ENCODE measurements at regions of chr3 and their contacts with region 1.

Region 1: GRCh38 chr3:157081681-157082210 is 78.2 kb downstream of the CCNL1 start:
- DNase-seq: no peak
- ATAC-seq: peak; percentile 95
- H3K4me3 ChIP-seq: no peak overlapping the region
- H3K27ac ChIP-seq: no peak overlapping the region
- H3K4me1 ChIP-seq: peaks cover 14% of the 10 kb centered on the region
- H3K27me3 ChIP-seq: no peaks in the 10 kb centered on the region
- CTCF ChIP-seq: peak; percentile 95
- EP300 ChIP-seq: no peak
- POLR2A ChIP-seq: no peak
- RAD21 ChIP-seq: peak; percentile 100

Region 2: DNA sequence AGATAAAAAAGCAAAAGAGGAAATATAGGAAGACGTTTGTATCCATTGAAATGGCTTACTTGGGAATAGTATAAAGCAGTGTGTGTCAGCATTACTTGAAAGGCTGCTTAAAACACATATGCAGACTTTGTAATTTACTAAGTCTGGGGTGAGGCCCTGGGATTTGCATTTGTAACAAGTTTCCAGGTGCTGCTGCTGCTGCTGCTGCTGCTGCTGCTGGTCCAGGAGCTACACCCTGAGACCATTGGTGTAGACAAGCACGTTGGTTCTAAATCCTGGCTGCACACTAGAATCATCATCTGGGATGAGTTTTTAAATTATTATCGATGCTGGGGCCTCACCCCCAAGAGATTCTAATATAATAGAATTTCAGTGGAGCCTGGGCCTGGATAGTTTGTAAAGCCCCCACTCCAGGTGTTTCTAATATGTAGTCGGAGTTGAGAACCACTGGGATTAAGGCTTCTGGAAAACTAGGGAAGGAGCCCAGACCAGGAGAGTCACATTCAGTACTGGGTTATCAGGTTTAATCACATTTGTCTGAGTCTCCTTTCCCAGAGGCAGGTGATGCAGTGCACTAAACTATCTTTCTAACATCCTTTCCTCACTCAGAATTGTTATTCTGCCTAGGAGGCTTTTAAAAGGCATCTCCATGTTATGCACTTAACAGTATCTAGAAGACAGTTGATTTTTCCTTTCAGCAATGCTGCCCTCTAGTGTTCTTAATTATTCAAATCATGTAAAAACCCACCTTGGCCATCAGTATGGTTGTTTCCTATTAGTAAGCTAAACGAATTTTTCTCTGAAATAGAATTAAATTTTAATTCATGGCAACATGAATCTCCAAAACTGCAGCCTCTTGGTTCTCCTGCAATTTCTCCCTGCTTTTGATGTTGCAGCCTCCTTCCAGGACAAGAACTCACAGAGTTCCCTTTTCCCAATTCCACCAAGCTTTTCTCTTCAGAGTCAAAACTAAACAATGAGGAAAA is 572.3 kb before region 1 on chr3:
- CTCF ChIA-PET with region 1: interaction called, 13 read pairs
- POLR2A ChIA-PET with region 1: no interaction called
- RAD21 ChIA-PET with region 1: interaction called, 8 read pairs
- SMC1A ChIA-PET with region 1: interaction called, 6 read pairs
- in situ Hi-C with region 1: no loop called
- intact Hi-C with region 1: no loop called
- DNase-seq: no peak
- ATAC-seq: peak; percentile 96
- H3K4me3 ChIP-seq: no peak overlapping the region
- H3K27ac ChIP-seq: no peak overlapping the region
- H3K4me1 ChIP-seq: no peaks in the 10 kb centered on the region
- H3K27me3 ChIP-seq: no peaks in the 10 kb centered on the region
- CTCF ChIP-seq: peak; percentile 36 to 70 (median 45); a peak in 4 of 6 replicates
- EP300 ChIP-seq: no peak
- POLR2A ChIP-seq: no peak
- RAD21 ChIP-seq: peak; percentile 86

Region 3: GRCh38 chr3:156674046-156674910 is 407.5 kb before region 1 on chr3 and contains the start of gene TIPARP:
- CTCF ChIA-PET with region 1: interaction called, 199 read pairs
- POLR2A ChIA-PET with region 1: interaction called, 5 read pairs
- RAD21 ChIA-PET with region 1: interaction called, 40 read pairs
- SMC1A ChIA-PET with region 1: interaction called, 142 read pairs
- in situ Hi-C with region 1: loop called (anchors 5 kb)
- intact Hi-C with region 1: loop called (anchors 1 kb)
- DNase-seq: peak; percentile 99
- ATAC-seq: peak; percentile 84
- H3K4me3 ChIP-seq: peak within 1 kb of the TSS; percentile 98
- H3K27ac ChIP-seq: peak within 1 kb of the TSS; percentile 73
- H3K4me1 ChIP-seq: no peaks in the 10 kb centered on the region
- H3K27me3 ChIP-seq: no peaks in the 10 kb centered on the region
- CTCF ChIP-seq: peak; percentile 63 to 90 (median 86)
- EP300 ChIP-seq: peak; percentile 65 to 71
- POLR2A ChIP-seq: peak; percentile 100
- RAD21 ChIP-seq: peak; percentile 81
- polyA plus RNA-seq, gene TIPARP: 3.2 to 3.3 TPM

Region 4: DNA sequence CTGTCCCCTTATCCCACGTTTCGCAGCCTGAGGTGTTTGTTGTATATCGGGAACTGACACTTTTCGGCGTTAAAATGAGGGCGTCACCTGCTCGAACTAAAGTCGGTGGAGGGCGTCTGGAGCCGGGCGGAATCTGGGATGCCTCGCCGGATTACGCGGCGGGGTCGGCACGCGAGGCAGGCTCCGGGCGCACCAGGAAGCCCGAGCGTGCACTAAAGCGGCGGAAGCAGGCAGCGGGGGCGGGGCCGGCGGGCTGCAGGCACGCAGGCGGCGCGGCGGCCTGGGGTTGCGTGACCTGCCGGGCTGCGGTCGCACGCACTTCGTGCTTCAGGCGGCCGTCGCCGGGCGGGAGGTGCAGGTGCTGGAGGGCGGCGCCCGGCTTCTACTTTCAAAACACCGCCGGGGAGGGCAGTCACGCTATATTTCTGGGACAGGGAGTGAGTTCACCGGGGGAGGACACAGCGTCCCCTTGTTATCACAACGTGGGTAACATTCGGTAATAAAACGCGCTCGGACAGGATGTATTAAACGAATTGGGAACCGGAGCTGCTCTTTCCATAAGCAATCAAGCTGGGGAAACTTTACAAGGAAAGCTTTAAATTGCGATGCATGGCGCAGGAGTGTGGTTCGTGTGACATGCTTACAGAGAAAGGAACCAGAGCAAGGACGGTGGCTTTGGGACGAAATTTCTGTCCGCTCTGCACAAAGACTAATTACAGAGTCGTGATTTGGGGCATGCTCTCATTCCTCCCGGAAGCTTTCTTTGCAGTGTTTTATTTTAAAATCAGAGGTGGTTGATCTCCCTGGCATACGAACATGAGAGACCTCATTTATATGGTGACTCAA is 264.7 kb before region 1 on chr3:
- CTCF ChIA-PET with region 1: interaction called, 6 read pairs
- POLR2A ChIA-PET with region 1: no interaction called
- RAD21 ChIA-PET with region 1: interaction called, 9 read pairs
- SMC1A ChIA-PET with region 1: interaction called, 7 read pairs
- in situ Hi-C with region 1: no loop called
- intact Hi-C with region 1: loop called (anchors 2 kb)
- DNase-seq: peak; percentile 55
- ATAC-seq: peak; percentile 78
- H3K4me3 ChIP-seq: peak overlapping the region; percentile 85
- H3K27ac ChIP-seq: peak overlapping the region; percentile 95
- H3K4me1 ChIP-seq: peaks cover 27% of the 10 kb centered on the region
- H3K27me3 ChIP-seq: no peaks in the 10 kb centered on the region
- CTCF ChIP-seq: peak; percentile 11 to 34 (median 21); a peak in 3 of 6 replicates
- EP300 ChIP-seq: peak; percentile 99 to 100
- POLR2A ChIP-seq: peak; percentile 94
- RAD21 ChIP-seq: peak; percentile 30

Region 5: GRCh38 chr3:156957715-156958114 is 124.0 kb before region 1 on chr3:
- CTCF ChIA-PET with region 1: interaction called, 3 read pairs
- POLR2A ChIA-PET with region 1: interaction called, 3 read pairs
- RAD21 ChIA-PET with region 1: no interaction called
- SMC1A ChIA-PET with region 1: interaction called, 3 read pairs
- in situ Hi-C with region 1: no loop called
- intact Hi-C with region 1: loop called (anchors 5 kb)
- DNase-seq: peak; percentile 54
- ATAC-seq: peak; percentile 100
- H3K4me3 ChIP-seq: 0 out of 2 replicates have a peak overlapping the region, but pooled peaks have one; percentile 1
- H3K27ac ChIP-seq: peak overlapping the region; percentile 22; the same call in 1 of the 2 replicates
- H3K4me1 ChIP-seq: peaks cover 12% of the 10 kb centered on the region
- H3K27me3 ChIP-seq: no peaks in the 10 kb centered on the region
- CTCF ChIP-seq: no peak
- EP300 ChIP-seq: peak; percentile 50 to 53; a peak in 2 of 4 replicates
- POLR2A ChIP-seq: no peak
- RAD21 ChIP-seq: peak; percentile 9; the same call in 1 of the 2 replicates

Region 6: DNA sequence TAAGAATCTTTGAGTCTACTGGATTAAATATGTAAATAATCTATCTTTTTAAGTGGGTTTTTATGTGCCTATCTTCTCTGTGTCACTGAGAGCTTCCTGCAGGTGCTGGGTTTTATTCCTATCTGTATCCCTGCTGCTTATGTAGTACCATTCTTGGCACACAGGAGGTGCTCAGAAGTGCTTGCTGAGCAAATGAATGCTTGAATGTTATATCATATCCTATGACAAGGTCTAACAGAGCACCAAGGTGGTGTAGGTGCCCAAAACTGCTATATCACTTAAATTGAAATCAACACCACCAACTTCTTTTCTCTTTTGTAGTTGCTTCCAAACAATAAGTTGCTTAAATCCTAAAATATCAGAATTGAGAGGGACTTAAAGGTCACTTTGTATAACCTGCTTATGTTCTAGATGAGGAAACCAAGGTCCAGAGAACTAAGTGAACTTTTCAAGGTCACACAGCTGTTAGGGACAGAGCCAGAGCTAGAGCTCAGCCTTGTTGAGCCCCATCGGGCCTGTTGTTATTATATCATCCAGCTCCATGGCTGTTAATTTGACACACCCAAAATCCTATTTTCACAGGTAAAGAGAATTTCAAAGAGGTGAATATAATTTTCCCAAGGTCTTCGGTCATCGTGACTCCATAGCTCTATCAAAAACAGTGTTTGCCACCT is 32.2 kb after region 1 on chr3:
- CTCF ChIA-PET with region 1: interaction called, 939 read pairs
- POLR2A ChIA-PET with region 1: no interaction called
- RAD21 ChIA-PET with region 1: interaction called, 119 read pairs
- SMC1A ChIA-PET with region 1: interaction called, 234 read pairs
- in situ Hi-C with region 1: no loop called
- intact Hi-C with region 1: no loop called
- DNase-seq: no peak
- ATAC-seq: peak; percentile 67
- H3K4me3 ChIP-seq: no peak overlapping the region
- H3K27ac ChIP-seq: no peak overlapping the region
- H3K4me1 ChIP-seq: no peaks in the 10 kb centered on the region
- H3K27me3 ChIP-seq: no peaks in the 10 kb centered on the region; a peak in 1 of 4 replicates
- CTCF ChIP-seq: 0 out of 6 replicates have a peak, but pooled peaks of 2 of the 3 experiments have one; percentile 3 to 21
- EP300 ChIP-seq: no peak
- POLR2A ChIP-seq: no peak
- RAD21 ChIP-seq: no peak

Region 7: GRCh38 chr3:157317895-157318294 is 236.1 kb after region 1 on chr3:
- CTCF ChIA-PET with region 1: no interaction called
- POLR2A ChIA-PET with region 1: no interaction called
- RAD21 ChIA-PET with region 1: no interaction called
- SMC1A ChIA-PET with region 1: no interaction called
- in situ Hi-C with region 1: no loop called
- intact Hi-C with region 1: no loop called
- DNase-seq: no peak
- ATAC-seq: no peak
- H3K4me3 ChIP-seq: no peak overlapping the region
- H3K27ac ChIP-seq: no peak overlapping the region
- H3K4me1 ChIP-seq: no peaks in the 10 kb centered on the region
- H3K27me3 ChIP-seq: no peaks in the 10 kb centered on the region
- CTCF ChIP-seq: no peak
- EP300 ChIP-seq: no peak
- POLR2A ChIP-seq: no peak
- RAD21 ChIP-seq: no peak

Region 8: DNA sequence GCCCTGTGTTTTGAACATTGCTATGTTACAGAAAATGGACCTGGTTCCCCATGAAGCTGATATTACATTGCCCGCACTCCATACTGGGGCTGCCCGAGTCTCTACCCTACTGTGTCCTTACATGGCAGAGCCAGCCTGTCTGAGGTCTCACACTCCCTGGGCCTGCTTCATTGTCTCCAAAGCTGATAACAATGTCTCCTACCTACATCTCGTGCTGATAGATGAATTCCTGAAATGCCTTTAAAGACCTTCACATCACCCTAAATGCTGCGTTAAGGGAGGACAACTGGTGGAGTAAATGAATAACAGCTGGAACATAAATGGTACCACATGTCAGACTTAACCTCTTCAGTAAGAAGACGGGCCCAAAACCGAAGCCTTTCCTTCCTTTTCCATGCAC is 292.0 kb after region 1 on chr3:
- CTCF ChIA-PET with region 1: no interaction called
- POLR2A ChIA-PET with region 1: no interaction called
- RAD21 ChIA-PET with region 1: no interaction called
- SMC1A ChIA-PET with region 1: no interaction called
- in situ Hi-C with region 1: no loop called
- intact Hi-C with region 1: no loop called
- DNase-seq: no peak
- ATAC-seq: no peak
- H3K4me3 ChIP-seq: no peak overlapping the region
- H3K27ac ChIP-seq: no peak overlapping the region
- H3K4me1 ChIP-seq: no peaks in the 10 kb centered on the region
- H3K27me3 ChIP-seq: no peaks in the 10 kb centered on the region
- CTCF ChIP-seq: no peak
- EP300 ChIP-seq: no peak
- POLR2A ChIP-seq: no peak
- RAD21 ChIP-seq: no peak

Measured in GM12878 (cell line).